ENCODE measurements at regions of chr1 and their contacts with region 1.

Region 1: GRCh38 chr1:161933592-161934588 is 89.8 kb downstream of the OLFML2B start:
- DNase-seq: peak in 5 of 9 experiments; percentile 7 to 63 (median 37)
- ATAC-seq: peak; percentile 80
- H3K4me3 ChIP-seq: peak overlapping the region in 1 of 2 experiments; percentile 11
- H3K4me3 Mint-ChIP-seq: peak overlapping the region; percentile 60
- H3K27ac ChIP-seq: peak overlapping the region in 1 of 2 experiments; percentile 54
- H3K27ac Mint-ChIP-seq: peak overlapping the region; percentile 88
- H3K4me1 ChIP-seq: peaks cover 43% of the 10 kb centered on the region
- H3K4me1 Mint-ChIP-seq: peaks cover 59% of the 10 kb centered on the region
- H3K27me3 ChIP-seq: no peaks in the 10 kb centered on the region
- H3K27me3 Mint-ChIP-seq: no peaks in the 10 kb centered on the region
- CTCF ChIP-seq: no peak

Region 2: GRCh38 chr1:161905269-161905884 is 28.5 kb before region 1 on chr1:
- CTCF ChIA-PET with region 1: interaction called, 4 read pairs
- POLR2A ChIA-PET with region 1: no interaction called
- intact Hi-C with region 1: loop called in 1 of 2 experiments (anchors 5 kb)
- DNase-seq: peak in 4 of 9 experiments; percentile 4 to 46 (median 18)
- ATAC-seq: peak; percentile 69
- H3K4me3 ChIP-seq: no peak overlapping the region
- H3K4me3 Mint-ChIP-seq: no peak overlapping the region
- H3K27ac ChIP-seq: no peak overlapping the region
- H3K27ac Mint-ChIP-seq: no peak overlapping the region
- H3K4me1 ChIP-seq: no peaks in the 10 kb centered on the region
- H3K4me1 Mint-ChIP-seq: peaks cover 15% of the 10 kb centered on the region
- H3K27me3 ChIP-seq: no peaks in the 10 kb centered on the region
- H3K27me3 Mint-ChIP-seq: no peaks in the 10 kb centered on the region
- CTCF ChIP-seq: peak; percentile 76

Region 3: GRCh38 chr1:161950377-161950776 is 16.5 kb after region 1 on chr1:
- CTCF ChIA-PET with region 1: interaction called, 3 read pairs
- POLR2A ChIA-PET with region 1: no interaction called
- intact Hi-C with region 1: loop called in 1 of 2 experiments (anchors 2 kb)
- DNase-seq: no peak
- ATAC-seq: no peak
- H3K4me3 ChIP-seq: no peak overlapping the region
- H3K4me3 Mint-ChIP-seq: no peak overlapping the region
- H3K27ac ChIP-seq: no peak overlapping the region
- H3K27ac Mint-ChIP-seq: no peak overlapping the region
- H3K4me1 ChIP-seq: peaks cover 20% of the 10 kb centered on the region
- H3K4me1 Mint-ChIP-seq: peaks cover 37% of the 10 kb centered on the region
- H3K27me3 ChIP-seq: no peaks in the 10 kb centered on the region
- H3K27me3 Mint-ChIP-seq: no peaks in the 10 kb centered on the region
- CTCF ChIP-seq: no peak

Region 4: DNA sequence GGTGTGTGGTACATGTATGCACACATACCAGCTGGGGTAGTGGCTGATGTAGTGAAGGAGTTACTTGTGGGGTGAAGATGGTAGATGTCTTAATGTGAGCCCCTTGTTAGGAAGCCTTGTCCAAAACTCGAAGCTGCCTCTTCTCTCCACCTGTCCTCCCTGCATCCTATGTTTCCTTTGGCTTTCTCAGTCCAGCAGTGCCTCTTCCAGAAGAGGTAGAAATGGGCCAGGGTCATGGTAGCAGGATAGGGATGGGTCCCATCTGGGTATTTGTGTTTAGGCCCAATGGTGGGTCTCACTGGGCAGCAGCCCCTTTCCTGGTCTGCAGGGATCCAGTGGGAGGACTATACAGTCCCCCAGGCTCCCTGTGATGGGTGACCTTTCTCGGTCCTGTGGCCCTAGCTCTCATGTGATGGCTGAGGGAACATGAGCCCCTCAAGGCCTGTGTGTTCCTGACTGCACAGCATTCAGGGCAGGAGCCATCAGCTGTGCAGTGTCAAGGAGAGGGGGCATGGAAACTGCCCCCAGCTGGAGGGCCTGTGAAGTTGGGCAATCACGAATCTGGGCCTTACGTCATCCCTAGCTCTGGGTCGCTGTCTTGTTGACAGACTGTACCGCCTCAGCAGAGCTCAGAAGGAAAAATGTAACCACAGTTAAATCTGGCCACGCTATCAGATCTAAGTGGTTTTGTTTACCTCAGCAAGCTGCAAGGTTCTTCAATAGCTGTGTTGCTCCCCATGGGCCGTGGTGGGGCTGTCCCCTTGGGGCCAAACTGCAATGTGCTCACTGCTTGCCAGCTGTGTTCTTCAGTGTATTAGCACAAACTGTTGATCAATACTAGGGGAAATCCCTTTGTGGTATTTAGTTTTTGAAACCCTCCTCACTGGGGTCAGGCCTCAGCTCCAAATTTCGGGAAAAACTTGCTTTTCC is 218.3 kb after region 1 on chr1:
- CTCF ChIA-PET with region 1: no interaction called
- POLR2A ChIA-PET with region 1: no interaction called
- intact Hi-C with region 1: no loop called
- DNase-seq: peak in 5 of 9 experiments; percentile 1 to 67 (median 23)
- ATAC-seq: no peak
- H3K4me3 ChIP-seq: no peak overlapping the region
- H3K4me3 Mint-ChIP-seq: no peak overlapping the region
- H3K27ac ChIP-seq: no peak overlapping the region
- H3K27ac Mint-ChIP-seq: no peak overlapping the region
- H3K4me1 ChIP-seq: no peaks in the 10 kb centered on the region
- H3K4me1 Mint-ChIP-seq: no peaks in the 10 kb centered on the region
- H3K27me3 ChIP-seq: no peaks in the 10 kb centered on the region
- H3K27me3 Mint-ChIP-seq: peaks cover 12% of the 10 kb centered on the region
- CTCF ChIP-seq: no peak

Measured in CD8-positive, alpha-beta T cell (primary cell).